Calu3 (cell line): ENCODE measurements at regions of chr12 and their contacts with region 1.

Region 1: GRCh38 chr12:39692258-39692853 is 72.8 kb upstream of the ABCD2 start:
- DNase-seq: no peak
- H3K4me3 Mint-ChIP-seq: no peak overlapping the region
- H3K27ac Mint-ChIP-seq: no peak overlapping the region
- H3K4me1 Mint-ChIP-seq: no peaks in the 10 kb centered on the region
- H3K27me3 Mint-ChIP-seq: no peaks in the 10 kb centered on the region
- CTCF ChIP-seq: no peak

Region 2: DNA sequence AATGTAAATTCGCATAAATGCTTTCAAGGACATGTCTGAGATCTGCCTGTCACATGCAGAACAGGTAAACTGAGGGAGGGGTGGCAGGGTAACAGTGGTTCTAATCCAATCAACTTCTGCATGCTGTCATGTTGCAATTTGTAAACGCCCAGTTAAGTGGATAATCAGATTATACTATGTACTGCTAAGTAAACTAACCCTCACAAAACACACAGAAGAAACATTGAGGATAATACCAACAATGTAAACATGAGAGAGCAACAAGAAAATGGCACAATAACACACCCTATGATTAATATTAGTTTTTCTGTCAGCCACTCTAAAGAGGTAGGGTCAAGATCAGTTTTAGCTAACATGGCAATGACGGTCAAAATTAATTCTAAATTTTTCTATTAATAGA is 373.2 kb before region 1 on chr12:
- CTCF ChIA-PET with region 1: no interaction called
- intact Hi-C with region 1: loop called (anchors 5 kb)
- DNase-seq: no peak
- H3K4me3 Mint-ChIP-seq: no peak overlapping the region
- H3K27ac Mint-ChIP-seq: no peak overlapping the region
- H3K4me1 Mint-ChIP-seq: no peaks in the 10 kb centered on the region
- H3K27me3 Mint-ChIP-seq: no peaks in the 10 kb centered on the region
- CTCF ChIP-seq: no peak

Region 3: GRCh38 chr12:39329876-39330275 is 362.5 kb before region 1 on chr12:
- CTCF ChIA-PET with region 1: no interaction called
- intact Hi-C with region 1: no loop called
- DNase-seq: no peak
- H3K4me3 Mint-ChIP-seq: no peak overlapping the region
- H3K27ac Mint-ChIP-seq: no peak overlapping the region
- H3K4me1 Mint-ChIP-seq: no peaks in the 10 kb centered on the region
- H3K27me3 Mint-ChIP-seq: no peaks in the 10 kb centered on the region
- CTCF ChIP-seq: no peak

Region 4: GRCh38 chr12:39341179-39341578 is 351.2 kb before region 1 on chr12:
- CTCF ChIA-PET with region 1: no interaction called
- intact Hi-C with region 1: loop called (anchors 10 kb)
- DNase-seq: no peak
- H3K4me3 Mint-ChIP-seq: no peak overlapping the region
- H3K27ac Mint-ChIP-seq: no peak overlapping the region
- H3K4me1 Mint-ChIP-seq: peaks cover 8% of the 10 kb centered on the region
- H3K27me3 Mint-ChIP-seq: no peaks in the 10 kb centered on the region
- CTCF ChIP-seq: no peak

Region 5: DNA sequence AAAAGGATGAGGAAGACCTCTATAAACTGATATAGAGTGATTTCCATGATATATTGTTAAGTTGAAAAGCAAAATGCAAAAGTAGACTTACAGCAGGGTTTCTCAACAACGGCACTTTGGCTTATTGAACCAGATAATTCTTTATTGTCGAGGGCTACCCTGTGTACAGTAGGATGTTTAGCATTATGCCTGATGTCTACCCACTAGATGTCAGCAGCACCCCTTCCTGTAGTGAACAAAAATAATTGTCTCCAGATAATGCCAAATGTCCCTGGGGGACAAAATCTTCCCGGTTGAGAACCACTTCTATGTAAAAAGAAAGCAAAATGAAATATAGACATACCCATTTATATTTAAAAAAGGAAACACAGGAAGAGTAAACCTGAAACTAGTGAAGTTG is 105.1 kb before region 1 on chr12:
- CTCF ChIA-PET with region 1: no interaction called
- intact Hi-C with region 1: loop called (anchors 5 kb)
- DNase-seq: no peak
- H3K4me3 Mint-ChIP-seq: no peak overlapping the region
- H3K27ac Mint-ChIP-seq: no peak overlapping the region
- H3K4me1 Mint-ChIP-seq: no peaks in the 10 kb centered on the region
- H3K27me3 Mint-ChIP-seq: no peaks in the 10 kb centered on the region
- CTCF ChIP-seq: no peak